Kidney (tissue), 22 donors: ENCODE measurements at regions of chr10 and their contacts with region 1.

Region 1: DNA sequence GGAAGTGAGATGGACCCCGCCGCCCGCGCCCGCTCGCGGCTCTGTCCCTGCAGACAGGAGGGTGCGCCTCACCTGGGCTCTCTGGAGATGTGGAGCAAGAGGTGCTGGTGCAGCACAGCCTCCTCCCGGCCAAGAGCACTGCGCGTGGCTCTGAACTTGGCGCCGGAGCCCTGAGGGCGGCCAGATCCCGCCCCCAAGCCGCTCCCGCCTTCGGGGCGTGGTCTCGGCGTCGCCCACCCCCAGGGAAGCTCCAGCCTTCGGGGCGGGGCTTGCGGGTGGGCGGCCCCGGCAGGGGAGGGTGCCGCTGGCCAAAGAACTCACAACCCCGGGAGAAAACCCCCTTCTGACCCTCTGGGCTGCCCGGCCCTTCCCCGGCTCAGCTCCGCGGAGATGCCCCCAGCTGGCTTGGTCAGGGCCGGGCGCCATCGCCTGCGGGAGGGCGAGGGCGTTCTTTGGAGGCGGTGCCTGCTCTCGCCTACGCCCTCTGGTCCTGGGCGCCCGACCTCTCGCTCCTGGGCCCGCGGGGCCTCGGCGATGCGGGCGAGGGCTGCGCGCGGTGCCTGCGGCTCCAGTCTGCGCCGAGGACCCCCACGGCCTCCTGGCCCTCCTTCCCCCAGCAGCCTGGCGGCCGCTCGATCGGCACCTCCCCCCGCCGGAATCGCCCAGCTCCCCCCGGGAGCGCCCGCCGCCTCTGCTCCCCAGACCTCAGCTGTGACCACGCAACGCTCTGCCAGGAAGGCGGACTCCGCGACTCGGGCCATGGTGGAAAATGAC is at the start of gene ZNF488:
- DNase-seq: peak; percentile 82 to 95 (median 92)
- H3K4me3 ChIP-seq: peak within 1 kb of the TSS; percentile 63 to 69 (median 67)
- H3K27ac ChIP-seq: peak within 1 kb of the TSS in 1 of 2 donors; percentile 35
- H3K4me1 ChIP-seq: peaks cover 0 to 9% (median 2%) of the 10 kb centered on the region in 3 donors
- H3K27me3 ChIP-seq: no peaks in the 10 kb centered on the region
- CTCF ChIP-seq: no peak
- total RNA-seq, gene ZNF488: 0.09 TPM

Region 2: DNA sequence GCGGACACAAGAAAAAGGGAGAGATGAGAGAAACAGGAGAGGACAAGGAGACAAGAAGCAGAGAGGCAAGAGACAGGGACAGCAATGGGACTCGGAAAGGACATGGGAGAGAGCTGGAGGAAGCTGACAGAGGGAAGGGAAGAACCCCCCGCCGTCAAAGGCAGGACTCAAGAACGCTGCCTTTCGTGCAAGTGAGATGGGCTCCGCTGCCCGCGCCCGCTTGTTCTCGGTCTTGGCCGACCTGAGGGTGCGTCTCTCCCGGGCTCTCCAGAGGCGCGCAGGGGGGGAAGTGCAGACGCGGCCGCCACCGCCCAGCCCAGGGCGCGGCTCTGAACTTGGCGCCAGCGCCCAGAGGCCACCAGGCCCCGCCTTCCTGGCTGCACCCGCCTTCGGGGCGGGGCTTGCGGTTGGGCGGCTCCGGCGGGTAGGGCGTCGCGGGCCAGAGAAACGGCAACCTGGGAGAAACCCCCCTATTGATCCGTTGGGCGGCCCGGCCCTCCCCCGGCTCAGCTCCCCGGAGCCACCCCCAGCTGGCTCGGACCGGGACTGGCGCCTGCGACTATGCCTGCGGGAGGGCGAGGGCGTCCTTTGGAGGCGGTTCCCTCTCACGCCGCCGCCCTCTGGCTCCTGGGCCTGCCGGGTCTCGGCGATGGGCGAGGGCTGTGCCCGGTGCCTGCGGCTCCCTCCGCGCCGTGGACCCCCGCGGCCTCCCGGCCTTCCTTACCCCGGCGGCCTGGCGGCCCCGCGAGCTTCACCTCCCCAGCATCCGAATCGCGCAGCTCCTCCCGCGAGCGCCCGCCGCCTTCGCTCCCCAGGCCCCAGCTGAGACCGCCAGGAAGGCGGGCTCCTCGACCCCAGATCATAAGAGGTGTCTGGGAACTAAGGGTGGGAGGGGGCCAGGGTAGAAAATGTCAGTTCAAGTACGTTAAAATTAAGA is 1099.8 kb before region 1 on chr10:
- intact Hi-C with region 1: loop called (anchors 5 kb)
- DNase-seq: peak; percentile 84 to 93 (median 88)
- H3K4me3 ChIP-seq: peak overlapping the region; percentile 57 to 72 (median 59)
- H3K27ac ChIP-seq: no peak overlapping the region
- H3K4me1 ChIP-seq: peaks cover 0 to 5% (median 3%) of the 10 kb centered on the region in 3 donors
- H3K27me3 ChIP-seq: peaks cover 5% of the 10 kb centered on the region
- CTCF ChIP-seq: no peak